Vagina (tissue), 2 donors: ENCODE measurements at regions of chr7 and their contacts with region 1.

Region 1: DNA sequence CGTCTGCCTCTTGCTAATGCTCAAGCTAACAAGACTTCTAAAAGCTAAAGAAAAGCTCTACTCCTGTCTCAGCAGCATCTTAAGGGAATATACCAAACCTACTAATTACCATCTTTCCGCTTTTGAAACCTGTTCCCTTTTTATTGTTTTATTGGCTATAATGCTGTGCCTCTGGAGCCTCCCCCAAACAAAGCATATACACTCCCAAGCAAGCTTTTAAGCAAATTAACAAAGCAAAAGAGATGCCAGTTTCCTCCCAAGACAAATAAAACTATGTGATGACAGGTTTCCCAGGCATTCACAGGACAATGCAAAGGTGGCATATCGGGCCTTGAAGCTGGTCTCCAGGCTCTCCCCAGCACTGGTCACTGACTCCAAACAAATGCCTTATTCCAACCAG is 52.9 kb downstream of the SLC37A3 start:
- DNase-seq: no peak
- H3K4me3 ChIP-seq: no peak overlapping the region
- H3K27ac ChIP-seq: no peak overlapping the region
- H3K4me1 ChIP-seq: peaks cover 7% of the 10 kb centered on the region
- H3K27me3 ChIP-seq: no peaks in the 10 kb centered on the region
- CTCF ChIP-seq: no peak
- POLR2A ChIP-seq: no peak

Region 2: GRCh38 chr7:140316165-140316661 is 29.2 kb before region 1 on chr7:
- intact Hi-C with region 1: loop called (anchors 2 kb)
- DNase-seq: peak in 1 of 2 donors; percentile 90
- H3K4me3 ChIP-seq: peak overlapping the region; percentile 21 to 23
- H3K27ac ChIP-seq: peak overlapping the region; percentile 92
- H3K4me1 ChIP-seq: peaks cover 25% of the 10 kb centered on the region
- H3K27me3 ChIP-seq: no peaks in the 10 kb centered on the region
- CTCF ChIP-seq: no peak
- POLR2A ChIP-seq: no peak